CD8-positive, alpha-beta memory T cell (primary cell): ENCODE measurements at regions of chr11 and their contacts with region 1.

Region 1: GRCh38 chr11:95835768-95836488 is 45.6 kb downstream of the CEP57 start:
- DNase-seq: peak; percentile 10 to 69 (median 42)
- H3K4me3 ChIP-seq: no peak overlapping the region
- H3K4me3 Mint-ChIP-seq: no peak overlapping the region
- H3K27ac ChIP-seq: no peak overlapping the region
- H3K27ac Mint-ChIP-seq: peak overlapping the region in 6 of 8 donors; percentile 14 to 73 (median 50)
- H3K4me1 ChIP-seq: no peaks in the 10 kb centered on the region
- H3K4me1 Mint-ChIP-seq: no peaks in the 10 kb centered on the region
- H3K27me3 ChIP-seq: no peaks in the 10 kb centered on the region
- H3K27me3 Mint-ChIP-seq: no peaks in the 10 kb centered on the region

Region 2: GRCh38 chr11:95767498-95767897 is 68.4 kb before region 1 on chr11:
- CTCF ChIA-PET with region 1: no interaction called
- POLR2A ChIA-PET with region 1: no interaction called
- DNase-seq: no peak
- H3K4me3 ChIP-seq: no peak overlapping the region
- H3K4me3 Mint-ChIP-seq: no peak overlapping the region
- H3K27ac ChIP-seq: no peak overlapping the region
- H3K27ac Mint-ChIP-seq: peak overlapping the region in 3 of 8 donors; percentile 22 to 47 (median 31)
- H3K4me1 ChIP-seq: peaks cover 4% of the 10 kb centered on the region
- H3K4me1 Mint-ChIP-seq: no peaks in the 10 kb centered on the region
- H3K27me3 ChIP-seq: no peaks in the 10 kb centered on the region
- H3K27me3 Mint-ChIP-seq: no peaks in the 10 kb centered on the region

Region 3: DNA sequence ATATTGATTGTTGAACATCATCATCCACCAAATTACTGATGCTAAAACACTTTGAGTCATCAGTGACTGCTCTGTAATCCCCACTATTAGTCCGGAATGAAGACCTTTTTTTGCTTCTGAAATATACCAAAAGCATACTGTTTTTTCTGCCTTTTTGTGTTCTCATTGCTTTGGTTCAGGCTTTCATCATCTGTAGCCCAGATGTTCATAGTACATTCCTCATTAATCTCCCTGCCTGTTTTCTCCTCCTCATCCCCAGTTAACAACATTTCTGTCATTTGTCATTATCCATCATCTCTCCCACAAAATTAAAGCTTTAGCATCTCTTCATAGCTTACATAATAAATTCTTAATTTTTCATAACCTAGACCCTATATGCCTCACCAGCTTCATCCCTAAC is 36.4 kb before region 1 on chr11:
- CTCF ChIA-PET with region 1: no interaction called
- POLR2A ChIA-PET with region 1: no interaction called
- DNase-seq: no peak
- H3K4me3 ChIP-seq: no peak overlapping the region
- H3K4me3 Mint-ChIP-seq: no peak overlapping the region
- H3K27ac ChIP-seq: no peak overlapping the region
- H3K27ac Mint-ChIP-seq: peak overlapping the region in 3 of 8 donors; percentile 20 to 56 (median 36)
- H3K4me1 ChIP-seq: no peaks in the 10 kb centered on the region
- H3K4me1 Mint-ChIP-seq: peaks cover 14 to 49% (median 40%) of the 10 kb centered on the region in 3 donors
- H3K27me3 ChIP-seq: no peaks in the 10 kb centered on the region
- H3K27me3 Mint-ChIP-seq: no peaks in the 10 kb centered on the region

Region 4: DNA sequence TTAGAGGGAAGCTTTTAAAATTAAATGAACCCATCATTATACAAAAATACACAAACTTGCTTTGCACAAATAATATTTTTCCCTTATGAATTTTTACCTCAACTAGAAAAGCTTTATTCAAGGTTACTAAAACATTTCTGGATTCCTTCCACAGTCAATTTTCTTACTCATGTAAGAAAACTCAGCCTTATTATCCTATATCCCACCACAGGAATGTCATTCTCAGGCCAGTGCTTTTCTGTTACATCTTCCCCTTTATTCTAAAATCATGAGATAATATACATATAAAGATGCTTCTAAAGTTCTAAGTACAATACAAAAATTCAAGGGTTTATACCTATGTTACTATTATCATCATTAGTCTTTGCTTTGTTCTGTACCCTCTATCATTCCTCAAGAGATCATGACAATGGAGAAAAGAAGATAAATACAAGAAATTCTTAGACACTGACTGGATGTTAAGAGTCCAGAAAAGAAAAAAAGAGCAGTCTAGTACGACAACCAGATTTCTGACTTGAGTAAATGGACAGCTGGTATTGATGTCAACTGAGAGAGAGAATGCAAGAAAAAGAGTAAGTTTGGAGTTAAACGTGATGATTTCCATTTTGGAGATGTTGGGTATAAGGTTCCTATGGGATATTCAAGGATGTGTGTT is 27.7 kb after region 1 on chr11:
- CTCF ChIA-PET with region 1: no interaction called
- POLR2A ChIA-PET with region 1: no interaction called
- DNase-seq: no peak
- H3K4me3 ChIP-seq: no peak overlapping the region
- H3K4me3 Mint-ChIP-seq: no peak overlapping the region
- H3K27ac ChIP-seq: no peak overlapping the region
- H3K27ac Mint-ChIP-seq: peak overlapping the region in 1 of 8 donors; percentile 21
- H3K4me1 ChIP-seq: no peaks in the 10 kb centered on the region
- H3K4me1 Mint-ChIP-seq: peaks cover 0 to 1% (median 0%) of the 10 kb centered on the region in 3 donors
- H3K27me3 ChIP-seq: no peaks in the 10 kb centered on the region
- H3K27me3 Mint-ChIP-seq: no peaks in the 10 kb centered on the region

Region 5: GRCh38 chr11:96389720-96390487 is 554.0 kb after region 1 on chr11 and contains the starts of genes CCDC82 and JRKL:
- CTCF ChIA-PET with region 1: interaction called, 20 read pairs
- POLR2A ChIA-PET with region 1: interaction called, 3 read pairs
- DNase-seq: peak; percentile 96 to 99 (median 97)
- H3K4me3 ChIP-seq: peak within 1 kb of the TSS; percentile 90
- H3K4me3 Mint-ChIP-seq: peak within 1 kb of the TSS; percentile 90 to 98 (median 95)
- H3K27ac ChIP-seq: peak within 1 kb of the TSS; percentile 85
- H3K27ac Mint-ChIP-seq: peak within 1 kb of the TSS; percentile 77 to 99 (median 94)
- H3K4me1 ChIP-seq: peaks cover 21% of the 10 kb centered on the region
- H3K4me1 Mint-ChIP-seq: peaks cover 35 to 68% (median 63%) of the 10 kb centered on the region in 3 donors
- H3K27me3 ChIP-seq: no peaks in the 10 kb centered on the region
- H3K27me3 Mint-ChIP-seq: no peaks in the 10 kb centered on the region
- total RNA-seq, gene CCDC82: 23.4 to 25.3 TPM
- total RNA-seq, gene JRKL: 9.7 to 10.4 TPM